Aorta (tissue), 5 donors: ENCODE measurements at regions of chr1 and their contacts with region 1.

Region 1: GRCh38 chr1:156927215-156928042 is 7.0 kb downstream of the LRRC71 start:
- DNase-seq: peak; percentile 82 to 91
- ATAC-seq: peak; percentile 53
- H3K4me3 ChIP-seq: no peak overlapping the region
- H3K27ac ChIP-seq: no peak overlapping the region
- H3K4me1 ChIP-seq: no peaks in the 10 kb centered on the region
- H3K27me3 ChIP-seq: peaks cover 0 to 2% of the 10 kb centered on the region in 2 donors

Region 2: DNA sequence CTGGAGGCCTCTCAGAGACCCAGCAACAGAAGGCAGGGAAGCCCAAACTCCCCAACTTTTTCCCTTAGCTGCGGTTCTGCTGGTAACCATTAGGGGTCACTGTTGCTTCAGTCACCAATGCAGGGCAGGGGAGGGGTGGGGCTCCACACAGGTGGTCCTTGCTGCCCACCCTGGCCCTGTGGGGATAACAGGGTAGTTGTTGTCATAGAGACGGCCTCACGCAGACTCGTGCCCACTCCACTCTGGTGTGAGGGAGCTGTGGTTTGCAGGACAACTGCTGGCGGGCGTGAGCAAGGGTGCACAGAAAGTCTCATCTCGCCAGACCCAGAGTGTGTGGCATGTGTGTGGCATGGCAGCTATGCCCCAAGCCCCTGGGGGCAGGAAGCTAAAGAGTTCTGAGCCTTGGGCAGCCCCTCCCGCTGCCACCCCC is 88.4 kb before region 1 on chr1:
- intact Hi-C with region 1: loop called in 1 of 2 experiments (anchors 5 kb)
- DNase-seq: no peak
- ATAC-seq: no peak
- H3K4me3 ChIP-seq: no peak overlapping the region
- H3K27ac ChIP-seq: no peak overlapping the region
- H3K4me1 ChIP-seq: no peaks in the 10 kb centered on the region
- H3K27me3 ChIP-seq: no peaks in the 10 kb centered on the region

Region 3: DNA sequence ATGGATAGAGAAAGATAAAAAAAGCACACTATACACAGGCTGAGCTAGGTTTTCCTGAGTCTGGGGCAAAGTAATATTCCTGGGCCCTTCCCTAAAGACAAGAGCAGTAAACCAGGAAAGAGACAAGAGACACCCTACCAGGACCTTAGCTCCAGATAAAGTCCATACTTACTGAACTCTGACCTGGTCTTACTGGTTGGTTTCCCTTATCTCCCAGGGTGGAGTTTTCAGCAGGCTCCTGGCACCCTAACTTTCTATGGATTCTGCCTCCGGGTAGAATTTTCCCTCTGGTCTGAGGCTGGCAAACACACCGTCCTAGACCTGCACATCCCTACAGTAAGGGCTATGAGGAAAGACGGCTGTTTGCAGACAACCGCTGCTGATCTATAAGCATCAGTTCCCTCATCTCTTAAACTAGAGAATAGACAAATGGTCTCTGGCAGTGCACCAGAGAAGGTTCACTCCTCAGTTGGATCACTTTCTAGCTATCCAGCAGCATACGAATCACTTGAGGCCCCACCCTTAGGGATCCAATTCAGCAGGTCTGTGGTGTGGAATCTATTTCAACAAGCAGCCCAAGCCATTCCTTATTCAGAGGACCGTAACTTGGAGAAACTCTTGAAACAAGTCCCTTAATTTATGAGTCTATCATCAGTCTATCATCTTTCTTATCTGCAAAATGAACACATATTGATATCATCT is 66.2 kb after region 1 on chr1:
- intact Hi-C with region 1: no loop called
- DNase-seq: no peak
- ATAC-seq: no peak
- H3K4me3 ChIP-seq: no peak overlapping the region
- H3K27ac ChIP-seq: no peak overlapping the region
- H3K4me1 ChIP-seq: no peaks in the 10 kb centered on the region
- H3K27me3 ChIP-seq: no peaks in the 10 kb centered on the region